ENCODE measurements at regions of chr3 and their contacts with region 1.

Region 1: DNA sequence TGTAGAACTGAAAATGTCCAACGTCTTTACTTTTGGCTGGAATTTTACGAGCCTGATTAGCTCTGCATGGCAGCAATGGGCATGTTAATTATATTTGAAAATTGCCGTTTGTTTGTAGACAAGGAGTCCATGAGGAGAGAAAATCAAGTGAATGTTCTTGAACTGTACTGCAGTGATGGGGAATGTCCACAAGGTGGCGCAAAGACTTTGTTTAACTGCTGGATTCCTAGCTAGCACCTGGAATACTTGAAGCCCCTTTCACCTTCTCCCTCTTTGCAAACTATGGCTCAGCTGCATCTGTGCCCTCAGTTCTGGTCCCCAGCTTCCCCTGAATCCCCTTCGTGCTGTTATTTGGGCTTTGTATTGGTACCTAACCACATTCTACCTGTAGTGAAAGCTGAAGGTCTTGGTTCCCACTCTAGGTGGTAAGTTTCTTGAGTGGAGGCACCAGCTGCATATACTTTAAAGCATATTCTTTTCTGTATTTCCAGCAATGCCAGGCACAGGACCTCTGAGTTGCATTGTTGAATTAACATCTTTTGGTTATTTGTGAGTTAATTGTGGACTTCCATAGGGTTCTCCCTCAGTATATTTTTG is 25.3 kb downstream of the EXOG start:
- DNase-seq: peak in 1 of 2 donors; percentile 42
- ATAC-seq: no peak
- H3K4me3 ChIP-seq: no peak overlapping the region
- H3K27ac ChIP-seq: no peak overlapping the region
- H3K4me1 ChIP-seq: peaks cover 14 to 22% of the 10 kb centered on the region in 2 donors
- H3K27me3 ChIP-seq: no peaks in the 10 kb centered on the region
- CTCF ChIP-seq: peak; percentile 68 to 91 (median 81)
- POLR2A ChIP-seq: no peak

Region 2: GRCh38 chr3:38651154-38651789 is 129.8 kb after region 1 on chr3:
- in situ Hi-C with region 1: loop called (anchors 5 to 10 kb)
- intact Hi-C with region 1: loop called (anchors 1 kb)
- DNase-seq: peak; percentile 29 to 34
- ATAC-seq: peak; percentile 63 to 82
- H3K4me3 ChIP-seq: peak overlapping the region in 1 of 4 donors; percentile 15
- H3K27ac ChIP-seq: no peak overlapping the region
- H3K4me1 ChIP-seq: peaks cover 6 to 10% of the 10 kb centered on the region in 2 donors
- H3K27me3 ChIP-seq: peaks cover 19 to 25% (median 24%) of the 10 kb centered on the region in 3 donors
- CTCF ChIP-seq: peak; percentile 81 to 92 (median 89)
- POLR2A ChIP-seq: no peak

Region 3: GRCh38 chr3:38992117-38992760 is 470.8 kb after region 1 on chr3:
- in situ Hi-C with region 1: loop called in 1 of 4 experiments (anchors 25 kb)
- intact Hi-C with region 1: no loop called
- DNase-seq: no peak
- ATAC-seq: no peak
- H3K4me3 ChIP-seq: no peak overlapping the region
- H3K27ac ChIP-seq: no peak overlapping the region
- H3K4me1 ChIP-seq: no peaks in the 10 kb centered on the region
- H3K27me3 ChIP-seq: no peaks in the 10 kb centered on the region
- CTCF ChIP-seq: no peak
- POLR2A ChIP-seq: no peak

Region 4: GRCh38 chr3:39000008-39000450 is 478.5 kb after region 1 on chr3:
- in situ Hi-C with region 1: loop called in 2 of 4 experiments (anchors 25 kb)
- intact Hi-C with region 1: loop called (anchors 2 kb)
- DNase-seq: no peak
- ATAC-seq: no peak
- H3K4me3 ChIP-seq: no peak overlapping the region
- H3K27ac ChIP-seq: no peak overlapping the region
- H3K4me1 ChIP-seq: no peaks in the 10 kb centered on the region
- H3K27me3 ChIP-seq: no peaks in the 10 kb centered on the region
- CTCF ChIP-seq: peak in 3 of 5 experiments; percentile 18 to 43 (median 34)
- POLR2A ChIP-seq: no peak

Region 5: GRCh38 chr3:39038165-39038564 is 516.7 kb after region 1 on chr3:
- in situ Hi-C with region 1: loop called in 1 of 4 experiments (anchors 25 kb)
- intact Hi-C with region 1: loop called (anchors 5 kb)
- DNase-seq: no peak
- ATAC-seq: no peak
- H3K4me3 ChIP-seq: no peak overlapping the region
- H3K27ac ChIP-seq: no peak overlapping the region
- H3K4me1 ChIP-seq: no peaks in the 10 kb centered on the region
- H3K27me3 ChIP-seq: no peaks in the 10 kb centered on the region
- CTCF ChIP-seq: no peak
- POLR2A ChIP-seq: no peak

Region 6: GRCh38 chr3:39501968-39502837 is 980.7 kb after region 1 on chr3:
- in situ Hi-C with region 1: no loop called
- intact Hi-C with region 1: no loop called
- DNase-seq: no peak
- ATAC-seq: no peak
- H3K4me3 ChIP-seq: peak overlapping the region in 2 of 4 donors; percentile 25
- H3K27ac ChIP-seq: no peak overlapping the region
- H3K4me1 ChIP-seq: no peaks in the 10 kb centered on the region
- H3K27me3 ChIP-seq: peaks cover 10 to 24% (median 13%) of the 10 kb centered on the region in 3 donors
- CTCF ChIP-seq: no peak
- POLR2A ChIP-seq: no peak